Dendritic cell treated with granulocyte-macrophage colony-stimulating factor and Interleukin-4, amounts not matched to agents 40 ng/mL and 50 ng/mL, for 4 days (primary cell): ENCODE measurements at regions of chr7 and their contacts with region 1.

Region 1: GRCh38 chr7:25565949-25566348 is 337.7 kb upstream of the NPVF start:
- H3K4me3 Mint-ChIP-seq: no peak overlapping the region
- H3K27ac Mint-ChIP-seq: no peak overlapping the region
- H3K4me1 Mint-ChIP-seq: no peaks in the 10 kb centered on the region
- H3K27me3 Mint-ChIP-seq: peaks cover 4% of the 10 kb centered on the region

Region 2: DNA sequence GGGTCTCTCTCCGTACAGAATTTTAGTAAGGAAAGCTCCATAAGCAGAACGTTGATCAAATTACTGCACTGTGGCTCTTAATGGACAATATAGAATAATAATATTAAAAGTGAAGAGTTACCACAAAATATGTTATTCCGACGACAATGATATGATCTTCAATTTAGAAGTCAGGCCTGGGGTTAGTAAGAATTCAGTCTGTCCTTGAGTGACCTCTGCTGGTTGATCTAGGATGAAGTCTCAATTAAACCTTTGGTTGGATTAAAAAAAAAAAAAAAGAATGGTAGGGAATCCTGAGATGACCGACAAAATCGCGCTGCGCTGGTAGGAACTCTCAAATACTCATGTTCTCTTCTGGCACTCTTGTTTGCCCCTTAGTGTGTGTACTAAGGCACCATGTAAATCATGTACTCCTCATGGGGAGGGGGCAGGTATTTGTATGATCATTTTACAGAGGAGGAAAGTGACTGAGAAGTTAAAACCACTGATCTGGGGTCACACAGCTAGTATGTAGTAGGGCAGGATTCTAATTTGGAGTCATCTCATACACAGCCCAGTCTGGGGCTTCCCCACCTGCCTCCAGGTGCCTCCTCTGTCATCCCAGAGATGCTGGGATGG is 176.4 kb before region 1 on chr7:
- intact Hi-C with region 1: loop called (anchors 1 kb)
- H3K4me3 Mint-ChIP-seq: no peak overlapping the region
- H3K27ac Mint-ChIP-seq: no peak overlapping the region
- H3K4me1 Mint-ChIP-seq: no peaks in the 10 kb centered on the region
- H3K27me3 Mint-ChIP-seq: peaks cover 16% of the 10 kb centered on the region

Region 3: GRCh38 chr7:25795824-25796235 is 229.9 kb after region 1 on chr7:
- intact Hi-C with region 1: no loop called
- H3K4me3 Mint-ChIP-seq: no peak overlapping the region
- H3K27ac Mint-ChIP-seq: no peak overlapping the region
- H3K4me1 Mint-ChIP-seq: no peaks in the 10 kb centered on the region
- H3K27me3 Mint-ChIP-seq: peaks cover 4% of the 10 kb centered on the region

Region 4: GRCh38 chr7:25851332-25852210 is 285.6 kb after region 1 on chr7:
- intact Hi-C with region 1: loop called (anchors 1 kb)
- H3K4me3 Mint-ChIP-seq: peak overlapping the region; percentile 72
- H3K27ac Mint-ChIP-seq: no peak overlapping the region
- H3K4me1 Mint-ChIP-seq: peaks cover 10% of the 10 kb centered on the region
- H3K27me3 Mint-ChIP-seq: peaks cover 70% of the 10 kb centered on the region